ENCODE measurements at regions of chr20 and their contacts with region 1.

Region 1: GRCh38 chr20:25294459-25295385 is 46.8 kb downstream of the PYGB start:
- DNase-seq: peak; percentile 47 to 87
- H3K4me3 ChIP-seq: no peak overlapping the region
- H3K27ac ChIP-seq: no peak overlapping the region
- H3K4me1 ChIP-seq: peaks cover 0 to 7% (median 2%) of the 10 kb centered on the region in 4 experiments; a peak in 3 of 7 replicates
- H3K27me3 ChIP-seq: no peaks in the 10 kb centered on the region; a peak in 1 of 7 replicates
- CTCF ChIP-seq: peak; percentile 99 to 100 (median 100)
- EP300 ChIP-seq: no peak
- POLR2A ChIP-seq: no peak
- RAD21 ChIP-seq: peak; percentile 85 to 87

Region 2: DNA sequence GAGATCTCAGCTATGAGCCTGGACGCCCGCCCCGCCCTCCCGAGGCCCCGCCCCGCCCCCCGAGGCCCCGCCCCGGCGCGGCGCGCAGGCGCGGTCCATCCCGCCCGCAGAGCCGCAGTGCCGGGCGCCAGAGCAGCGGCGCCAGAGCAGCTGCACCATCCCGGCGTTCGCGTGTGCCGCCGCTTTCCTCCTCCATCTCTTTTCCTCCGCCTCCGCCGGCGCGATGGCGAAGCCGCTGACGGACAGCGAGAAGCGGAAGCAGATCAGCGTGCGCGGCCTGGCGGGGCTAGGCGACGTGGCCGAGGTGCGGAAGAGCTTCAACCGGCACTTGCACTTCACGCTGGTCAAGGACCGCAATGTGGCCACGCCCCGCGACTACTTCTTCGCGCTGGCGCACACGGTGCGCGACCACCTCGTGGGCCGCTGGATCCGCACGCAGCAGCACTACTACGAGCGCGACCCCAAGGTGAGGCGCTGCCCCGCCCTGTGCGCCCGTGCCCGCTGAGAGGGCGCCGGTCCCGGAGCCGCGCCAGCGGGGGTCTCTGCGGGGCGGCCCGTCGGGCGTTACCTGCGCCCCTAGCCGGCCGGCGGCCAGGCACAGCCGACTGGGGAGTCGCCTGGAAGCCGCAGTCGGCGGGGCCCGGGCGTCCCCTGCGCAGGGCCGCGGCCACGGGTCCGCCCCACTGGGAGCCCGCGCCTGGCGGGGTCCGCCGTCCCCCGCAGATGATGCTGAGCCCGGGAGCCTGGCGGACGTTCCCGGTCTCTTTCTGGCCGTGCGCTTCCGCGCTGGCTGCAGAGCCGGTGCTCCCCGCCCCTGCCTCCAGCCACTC is 46.6 kb before region 1 on chr20 and contains the start of gene PYGB:
- CTCF ChIA-PET with region 1: interaction called, 17 read pairs
- POLR2A ChIA-PET with region 1: no interaction called
- DNase-seq: peak in 1 of 2 experiments; percentile 41
- H3K4me3 ChIP-seq: peak within 1 kb of the TSS; percentile 73 to 83 (median 77)
- H3K27ac ChIP-seq: peak within 1 kb of the TSS; percentile 56; the same call in 1 of the 2 replicates
- H3K4me1 ChIP-seq: peaks cover 3 to 7% (median 4%) of the 10 kb centered on the region in 4 experiments; a peak in 6 of 7 replicates
- H3K27me3 ChIP-seq: peaks cover 0 to 8% (median 7%) of the 10 kb centered on the region in 4 experiments; a peak in 4 of 7 replicates
- CTCF ChIP-seq: no peak
- EP300 ChIP-seq: 0 out of 3 replicates have a peak, but pooled peaks of 1 of the 2 experiments have one; percentile 10
- POLR2A ChIP-seq: peak in 1 of 2 experiments; percentile 90; a peak in 2 of 3 replicates
- RAD21 ChIP-seq: no peak
- total RNA-seq, gene PYGB: 54.9 and 56.0 TPM in 2 replicates

Region 3: DNA sequence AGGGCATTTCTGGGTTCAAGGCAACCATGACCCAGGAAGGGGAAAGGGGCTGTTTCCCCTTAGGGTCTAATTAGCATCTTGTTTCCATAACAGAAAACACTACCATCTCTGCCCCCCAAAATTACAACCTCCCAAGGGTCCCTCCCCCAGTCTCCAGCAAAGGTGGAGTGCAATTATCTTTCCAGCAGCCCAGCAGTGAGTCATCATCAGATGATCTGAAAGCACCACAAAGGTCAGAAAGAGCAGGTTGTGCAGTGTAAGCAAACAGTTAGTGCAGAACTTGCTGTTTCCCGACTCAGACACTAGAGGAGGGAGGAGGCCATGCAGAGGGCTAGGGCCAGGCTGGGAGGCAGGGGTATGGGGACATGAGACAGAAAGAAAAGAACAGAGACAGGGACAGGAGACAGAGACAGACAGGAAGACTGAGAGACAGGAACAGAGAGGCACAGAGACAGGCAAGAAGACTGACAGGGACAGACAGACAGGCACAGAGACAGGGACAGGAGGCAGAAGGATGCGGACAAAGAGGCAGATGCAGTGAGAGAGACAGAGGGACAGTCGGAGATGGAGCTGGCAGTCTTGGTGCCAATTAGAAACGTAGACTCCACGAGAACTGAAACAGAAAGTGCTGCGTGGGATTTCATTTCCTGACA is 15.7 kb after region 1 on chr20:
- CTCF ChIA-PET with region 1: interaction called, 16 read pairs
- POLR2A ChIA-PET with region 1: interaction called, 4 read pairs
- DNase-seq: no peak
- H3K4me3 ChIP-seq: no peak overlapping the region
- H3K27ac ChIP-seq: no peak overlapping the region
- H3K4me1 ChIP-seq: peaks cover 0 to 3% (median 0%) of the 10 kb centered on the region in 4 experiments; a peak in 2 of 7 replicates
- H3K27me3 ChIP-seq: no peaks in the 10 kb centered on the region
- CTCF ChIP-seq: peak in 2 of 3 experiments; percentile 28 to 35; a peak in 2 of 4 replicates
- EP300 ChIP-seq: no peak
- POLR2A ChIP-seq: no peak
- RAD21 ChIP-seq: peak; percentile 54 to 55

Region 4: GRCh38 chr20:25336561-25337422 is 42.1 kb after region 1 on chr20:
- CTCF ChIA-PET with region 1: interaction called, 14 read pairs
- POLR2A ChIA-PET with region 1: interaction called, 4 read pairs
- DNase-seq: peak; percentile 38 to 57
- H3K4me3 ChIP-seq: no peak overlapping the region
- H3K27ac ChIP-seq: no peak overlapping the region
- H3K4me1 ChIP-seq: peaks cover 0 to 9% (median 4%) of the 10 kb centered on the region in 4 experiments; a peak in 4 of 7 replicates
- H3K27me3 ChIP-seq: no peaks in the 10 kb centered on the region
- CTCF ChIP-seq: peak; percentile 58 to 76 (median 71)
- EP300 ChIP-seq: no peak
- POLR2A ChIP-seq: no peak
- RAD21 ChIP-seq: peak; percentile 83 to 91

Region 5: GRCh38 chr20:25407311-25408169 is 112.8 kb after region 1 on chr20 and contains the start of gene GINS1:
- CTCF ChIA-PET with region 1: interaction called, 37 read pairs
- POLR2A ChIA-PET with region 1: interaction called, 22 read pairs
- DNase-seq: peak; percentile 91 to 100
- H3K4me3 ChIP-seq: peak within 1 kb of the TSS; percentile 59 to 90 (median 80)
- H3K27ac ChIP-seq: peak within 1 kb of the TSS; percentile 98
- H3K4me1 ChIP-seq: peaks cover 0 to 8% (median 2%) of the 10 kb centered on the region in 4 experiments; a peak in 2 of 7 replicates
- H3K27me3 ChIP-seq: no peaks in the 10 kb centered on the region
- CTCF ChIP-seq: 0 out of 4 replicates have a peak, but pooled peaks of 1 of the 3 experiments have one; percentile 1
- EP300 ChIP-seq: peak in 1 of 2 experiments; percentile 68; a peak in 1 of 3 replicates
- POLR2A ChIP-seq: peak; percentile 85 to 98
- RAD21 ChIP-seq: no peak
- total RNA-seq, gene GINS1: 68.4 and 69.9 TPM in 2 replicates

Measured in H1 (cell line).